Activated T-helper 1 cell treated with anti-CD3 and anti-CD28 coated beads, Interleukin-12 subunit alpha, Interleukin-12 subunit beta, Interleukin-2, Interleukin-4 antibody, amounts not matched to agents 30 ng/mL and 10 ng/mL and 1 ng/mL, durations not matched to agents 14 hours and 24 hours and 36 hours (primary cell): ENCODE measurements at regions of chr7 and their contacts with region 1.

Region 1: DNA sequence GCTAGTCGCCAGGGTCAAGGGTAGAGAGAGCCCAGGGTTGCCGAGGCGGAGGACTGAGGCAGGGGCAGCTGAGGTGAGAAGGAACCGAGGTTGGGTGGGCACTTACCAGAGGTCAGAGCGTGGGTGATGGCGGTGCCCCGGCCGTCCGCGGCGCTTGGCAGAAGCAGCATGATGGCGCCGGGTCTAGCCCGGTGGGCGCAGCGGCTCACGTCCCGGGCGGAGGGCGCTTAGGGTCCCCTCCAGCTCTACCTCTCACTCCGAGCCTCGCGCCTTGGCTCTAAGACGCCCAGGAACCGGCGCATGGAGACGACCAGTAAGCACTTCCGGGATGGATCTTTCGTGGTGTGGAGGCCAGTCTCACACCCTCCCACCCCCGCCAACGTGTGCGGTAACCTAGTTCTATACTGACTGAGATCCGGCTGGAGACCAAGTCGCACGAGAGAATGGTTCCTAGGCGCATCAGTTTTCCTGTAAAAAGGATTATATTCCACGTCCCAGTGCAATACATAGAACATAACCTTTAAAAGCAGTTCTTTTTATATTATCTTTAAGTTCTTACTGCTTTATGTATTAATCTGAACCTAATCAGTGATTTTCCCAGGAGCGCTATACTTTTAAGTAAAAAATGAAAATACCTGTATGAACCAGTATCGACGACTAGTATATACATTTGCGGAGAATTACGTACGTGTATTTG is at the start of gene DNAJC2:
- DNase-seq: peak; percentile 80
- H3K4me3 Mint-ChIP-seq: peak within 1 kb of the TSS; percentile 100
- H3K27ac Mint-ChIP-seq: peak within 1 kb of the TSS; percentile 99
- H3K4me1 Mint-ChIP-seq: peaks cover 58% of the 10 kb centered on the region
- H3K27me3 Mint-ChIP-seq: no peaks in the 10 kb centered on the region
- total RNA-seq, gene DNAJC2: 63.8 and 68.6 TPM in 2 replicates

Region 2: GRCh38 chr7:103148994-103149807 is 195.4 kb before region 1 on chr7 and contains the start of gene NAPEPLD:
- intact Hi-C with region 1: loop called (anchors 2 kb)
- DNase-seq: peak; percentile 65
- H3K4me3 Mint-ChIP-seq: peak within 1 kb of the TSS; percentile 96
- H3K27ac Mint-ChIP-seq: peak within 1 kb of the TSS; percentile 97
- H3K4me1 Mint-ChIP-seq: peaks cover 54% of the 10 kb centered on the region
- H3K27me3 Mint-ChIP-seq: no peaks in the 10 kb centered on the region
- total RNA-seq, gene NAPEPLD: 7.8 and 8.1 TPM in 2 replicates

Region 3: GRCh38 chr7:103325744-103326143 is 18.9 kb before region 1 on chr7:
- intact Hi-C with region 1: loop called (anchors 2 kb)
- DNase-seq: no peak
- H3K4me3 Mint-ChIP-seq: no peak overlapping the region
- H3K27ac Mint-ChIP-seq: no peak overlapping the region
- H3K4me1 Mint-ChIP-seq: peaks cover 14% of the 10 kb centered on the region
- H3K27me3 Mint-ChIP-seq: no peaks in the 10 kb centered on the region

Region 4: GRCh38 chr7:103369430-103369829 is 24.8 kb after region 1 on chr7:
- intact Hi-C with region 1: no loop called
- DNase-seq: no peak
- H3K4me3 Mint-ChIP-seq: no peak overlapping the region
- H3K27ac Mint-ChIP-seq: no peak overlapping the region
- H3K4me1 Mint-ChIP-seq: no peaks in the 10 kb centered on the region
- H3K27me3 Mint-ChIP-seq: peaks cover 2% of the 10 kb centered on the region

Region 5: GRCh38 chr7:103412151-103412550 is 67.5 kb after region 1 on chr7:
- intact Hi-C with region 1: loop called (anchors 1 kb)
- DNase-seq: no peak
- H3K4me3 Mint-ChIP-seq: no peak overlapping the region
- H3K27ac Mint-ChIP-seq: no peak overlapping the region
- H3K4me1 Mint-ChIP-seq: no peaks in the 10 kb centered on the region
- H3K27me3 Mint-ChIP-seq: peaks cover 24% of the 10 kb centered on the region

Region 6: DNA sequence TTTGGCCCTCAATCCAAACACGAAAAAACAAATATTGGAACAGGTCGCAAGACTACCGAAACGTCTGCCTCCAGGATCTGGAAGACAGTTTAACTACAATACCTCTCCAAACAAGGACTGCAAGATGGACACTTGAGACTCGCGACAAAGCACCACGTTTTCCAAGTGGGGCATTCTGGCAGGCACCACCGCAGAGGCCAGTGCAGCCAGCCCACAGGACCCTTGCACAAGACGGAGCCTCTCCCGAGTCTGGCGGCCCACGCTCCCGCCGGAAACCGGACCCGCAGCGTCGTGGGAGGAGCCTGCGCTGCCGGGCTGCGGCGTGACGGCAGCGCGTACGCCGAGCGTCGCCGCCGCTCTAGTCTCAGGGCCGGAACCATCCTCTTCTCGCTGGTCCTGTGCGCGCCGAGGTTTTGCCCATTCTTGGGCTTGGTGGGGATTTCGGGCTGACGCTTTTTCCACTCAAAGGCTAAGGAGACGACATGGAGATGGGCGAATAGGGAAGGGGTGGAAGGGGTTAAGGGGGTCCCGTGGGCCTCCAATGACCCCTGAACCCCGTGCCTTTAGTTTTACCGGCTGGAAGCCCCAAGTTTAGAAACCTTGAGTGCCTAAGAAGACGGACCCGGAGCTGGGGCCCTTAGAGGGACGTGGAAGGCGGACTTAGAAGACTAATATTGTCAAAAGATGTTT is 863.3 kb after region 1 on chr7 and contains the start of gene ORC5:
- intact Hi-C with region 1: loop called (anchors 5 kb)
- DNase-seq: peak; percentile 79
- H3K4me3 Mint-ChIP-seq: peak within 1 kb of the TSS; percentile 94
- H3K27ac Mint-ChIP-seq: peak within 1 kb of the TSS; percentile 92
- H3K4me1 Mint-ChIP-seq: peaks cover 43% of the 10 kb centered on the region
- H3K27me3 Mint-ChIP-seq: peaks cover 8% of the 10 kb centered on the region
- total RNA-seq, gene ORC5: 32.5 and 35.8 TPM in 2 replicates

Region 7: GRCh38 chr7:104943502-104944343 is 1599.1 kb after region 1 on chr7:
- intact Hi-C with region 1: loop called (anchors 2 kb)
- DNase-seq: peak; percentile 70
- H3K4me3 Mint-ChIP-seq: peak overlapping the region; percentile 96
- H3K27ac Mint-ChIP-seq: peak overlapping the region; percentile 100
- H3K4me1 Mint-ChIP-seq: peaks cover 72% of the 10 kb centered on the region
- H3K27me3 Mint-ChIP-seq: peaks cover 2% of the 10 kb centered on the region